Colonic mucosa (tissue), 4 donors: ENCODE measurements at regions of chr3 and their contacts with region 1.

Region 1: DNA sequence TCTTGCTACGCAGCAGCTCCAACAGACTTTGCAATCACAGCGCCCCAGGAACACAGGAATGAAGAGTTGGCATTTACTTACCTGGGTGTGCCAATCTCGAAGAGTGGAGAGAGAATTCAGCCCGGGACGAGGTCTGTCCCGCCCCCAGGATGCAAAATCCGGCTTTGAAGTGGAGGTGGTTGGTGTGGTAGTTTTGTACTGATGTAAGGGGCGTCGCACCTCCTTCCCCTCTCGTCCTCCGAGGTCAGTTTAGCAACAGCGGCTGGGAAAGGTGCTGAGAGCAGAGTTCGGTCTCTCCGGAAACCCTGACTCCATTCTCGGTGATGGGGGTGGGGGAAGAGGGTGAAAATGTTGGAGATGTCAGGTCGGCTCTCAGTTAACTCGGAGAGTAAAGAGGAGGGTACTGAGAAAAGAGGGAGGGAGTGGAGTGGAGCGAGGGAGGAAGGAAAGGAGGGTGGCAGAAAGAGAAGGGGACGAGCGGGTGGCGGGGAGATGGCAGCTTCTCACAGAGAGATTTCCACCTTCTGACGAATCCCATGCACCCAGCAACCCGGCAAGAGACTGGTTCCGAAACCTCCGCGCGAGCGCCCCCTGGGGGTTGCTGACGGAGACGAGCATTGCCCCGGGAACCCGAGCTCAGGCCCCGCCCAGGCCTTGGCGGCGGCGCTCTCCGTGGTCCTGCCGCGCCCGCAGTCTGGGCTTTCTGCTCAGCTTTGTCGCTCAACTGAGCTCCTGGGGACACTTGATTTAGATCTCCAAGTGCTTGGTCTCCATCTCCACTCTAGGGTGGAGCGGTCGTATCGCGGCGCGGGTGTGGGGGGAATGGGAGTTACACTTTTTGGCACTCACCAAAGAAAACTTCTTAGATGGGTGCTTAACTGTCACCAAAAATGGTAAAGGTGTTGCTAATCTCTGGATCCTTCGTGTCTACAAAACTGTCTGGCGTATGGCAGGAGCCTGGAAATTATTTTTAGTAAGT is at the start of gene CPNE4:
- DNase-seq: peak; percentile 77
- H3K4me3 ChIP-seq: no peak within 1 kb of the TSS
- H3K27ac ChIP-seq: no peak within 1 kb of the TSS
- H3K4me1 ChIP-seq: no peaks in the 10 kb centered on the region
- H3K27me3 ChIP-seq: peaks cover 29% of the 10 kb centered on the region
- CTCF ChIP-seq: peak; percentile 32
- total RNA-seq, gene CPNE4: 0.16 TPM in 1 of 2 donors, not detected in the other

Region 2: DNA sequence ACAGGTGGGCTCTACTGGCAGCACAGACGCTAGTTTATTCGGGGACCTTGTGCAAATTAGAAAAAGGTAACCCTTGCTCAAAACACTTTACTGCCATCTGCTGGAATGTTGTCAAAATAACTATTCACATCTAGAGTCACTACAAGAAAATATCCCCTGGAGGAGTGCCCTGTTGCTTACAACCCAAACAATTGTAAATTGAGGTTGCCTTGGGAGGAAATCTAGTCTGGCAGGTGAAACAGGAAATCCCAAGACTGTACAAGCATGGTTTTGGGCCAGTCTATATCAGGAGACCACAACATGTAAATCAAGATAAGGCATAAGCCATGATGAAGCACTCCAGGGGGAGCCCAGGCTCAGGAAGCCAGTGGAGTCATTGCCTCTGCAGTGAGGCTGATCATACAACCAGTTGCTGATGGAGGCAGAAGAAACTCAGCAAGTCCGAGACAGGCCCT is 145.6 kb after region 1 on chr3:
- intact Hi-C with region 1: no loop called
- DNase-seq: no peak
- H3K4me3 ChIP-seq: no peak overlapping the region
- H3K27ac ChIP-seq: no peak overlapping the region
- H3K4me1 ChIP-seq: no peaks in the 10 kb centered on the region
- H3K27me3 ChIP-seq: no peaks in the 10 kb centered on the region
- CTCF ChIP-seq: peak; percentile 23

Region 3: GRCh38 chr3:132209860-132210259 is 175.1 kb after region 1 on chr3:
- intact Hi-C with region 1: loop called (anchors 5 kb)
- DNase-seq: no peak
- H3K4me3 ChIP-seq: no peak overlapping the region
- H3K27ac ChIP-seq: no peak overlapping the region
- H3K4me1 ChIP-seq: no peaks in the 10 kb centered on the region
- H3K27me3 ChIP-seq: no peaks in the 10 kb centered on the region
- CTCF ChIP-seq: no peak